ENCODE measurements at regions of chr2 and their contacts with region 1.

Region 1: GRCh38 chr2:177164584-177165052 is 48.0 kb upstream of the HNRNPA3 start:
- DNase-seq: peak; percentile 94
- H3K4me3 ChIP-seq: peak overlapping the region; percentile 32 to 50
- H3K27ac ChIP-seq: peak overlapping the region; percentile 93 to 95
- H3K4me1 ChIP-seq: peaks cover 23% of the 10 kb centered on the region
- H3K27me3 ChIP-seq: no peaks in the 10 kb centered on the region
- CTCF ChIP-seq: peak; percentile 98 to 100 (median 98)
- POLR2A ChIP-seq: no peak

Region 2: DNA sequence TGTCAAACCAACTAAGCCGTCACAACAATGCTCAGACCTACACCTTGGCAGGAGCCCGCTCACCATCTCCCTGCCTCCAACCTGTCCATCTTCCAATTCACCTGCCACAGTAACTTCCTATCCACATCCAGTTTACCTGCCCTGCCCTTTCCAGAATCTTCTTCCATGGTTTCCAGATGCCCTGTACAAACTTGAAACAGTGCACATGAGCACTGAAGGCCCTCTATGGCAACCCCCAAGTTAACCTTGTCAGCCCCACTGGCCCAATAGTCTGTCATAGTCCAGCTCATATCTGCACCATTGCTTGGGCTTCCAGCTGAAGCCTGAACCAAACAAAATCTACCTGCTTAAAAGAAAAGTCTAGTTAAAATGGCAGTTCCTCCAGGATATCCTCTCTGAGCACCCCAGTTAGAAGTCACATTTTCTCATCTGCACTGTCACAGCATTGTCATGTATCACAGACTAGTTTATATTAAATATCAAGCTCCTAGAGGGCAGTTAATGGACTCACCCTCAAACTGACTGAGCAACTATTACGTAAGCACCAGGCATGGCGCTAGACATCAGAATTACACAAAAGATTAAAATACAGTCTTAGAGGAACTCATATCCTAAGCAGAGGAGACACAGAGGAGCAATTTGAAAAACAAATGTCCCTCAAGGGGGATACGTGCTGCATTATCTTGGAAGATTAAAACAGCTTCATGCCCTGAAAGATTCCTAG is 88.4 kb after region 1 on chr2:
- intact Hi-C with region 1: no loop called
- DNase-seq: no peak
- H3K4me3 ChIP-seq: no peak overlapping the region
- H3K27ac ChIP-seq: peak overlapping the region; percentile 5 to 60
- H3K4me1 ChIP-seq: peaks cover 84% of the 10 kb centered on the region
- H3K27me3 ChIP-seq: no peaks in the 10 kb centered on the region
- CTCF ChIP-seq: no peak
- POLR2A ChIP-seq: no peak

Region 3: GRCh38 chr2:177263451-177264208 is 99.0 kb after region 1 on chr2:
- intact Hi-C with region 1: loop called (anchors 10 kb)
- DNase-seq: peak; percentile 98
- H3K4me3 ChIP-seq: peak overlapping the region; percentile 99 to 100
- H3K27ac ChIP-seq: peak overlapping the region; percentile 100
- H3K4me1 ChIP-seq: peaks cover 37% of the 10 kb centered on the region
- H3K27me3 ChIP-seq: no peaks in the 10 kb centered on the region
- CTCF ChIP-seq: peak; percentile 79 to 94 (median 90)
- POLR2A ChIP-seq: no peak

Region 4: GRCh38 chr2:177325270-177325929 is 160.8 kb after region 1 on chr2:
- intact Hi-C with region 1: loop called (anchors 10 kb)
- DNase-seq: no peak
- H3K4me3 ChIP-seq: no peak overlapping the region
- H3K27ac ChIP-seq: no peak overlapping the region
- H3K4me1 ChIP-seq: no peaks in the 10 kb centered on the region
- H3K27me3 ChIP-seq: no peaks in the 10 kb centered on the region
- CTCF ChIP-seq: no peak
- POLR2A ChIP-seq: no peak

Region 5: GRCh38 chr2:177419274-177419673 is 254.7 kb after region 1 on chr2:
- intact Hi-C with region 1: loop called (anchors 10 kb)
- DNase-seq: no peak
- H3K4me3 ChIP-seq: no peak overlapping the region
- H3K27ac ChIP-seq: no peak overlapping the region
- H3K4me1 ChIP-seq: peaks cover 13% of the 10 kb centered on the region
- H3K27me3 ChIP-seq: no peaks in the 10 kb centered on the region
- CTCF ChIP-seq: no peak
- POLR2A ChIP-seq: no peak

Region 6: DNA sequence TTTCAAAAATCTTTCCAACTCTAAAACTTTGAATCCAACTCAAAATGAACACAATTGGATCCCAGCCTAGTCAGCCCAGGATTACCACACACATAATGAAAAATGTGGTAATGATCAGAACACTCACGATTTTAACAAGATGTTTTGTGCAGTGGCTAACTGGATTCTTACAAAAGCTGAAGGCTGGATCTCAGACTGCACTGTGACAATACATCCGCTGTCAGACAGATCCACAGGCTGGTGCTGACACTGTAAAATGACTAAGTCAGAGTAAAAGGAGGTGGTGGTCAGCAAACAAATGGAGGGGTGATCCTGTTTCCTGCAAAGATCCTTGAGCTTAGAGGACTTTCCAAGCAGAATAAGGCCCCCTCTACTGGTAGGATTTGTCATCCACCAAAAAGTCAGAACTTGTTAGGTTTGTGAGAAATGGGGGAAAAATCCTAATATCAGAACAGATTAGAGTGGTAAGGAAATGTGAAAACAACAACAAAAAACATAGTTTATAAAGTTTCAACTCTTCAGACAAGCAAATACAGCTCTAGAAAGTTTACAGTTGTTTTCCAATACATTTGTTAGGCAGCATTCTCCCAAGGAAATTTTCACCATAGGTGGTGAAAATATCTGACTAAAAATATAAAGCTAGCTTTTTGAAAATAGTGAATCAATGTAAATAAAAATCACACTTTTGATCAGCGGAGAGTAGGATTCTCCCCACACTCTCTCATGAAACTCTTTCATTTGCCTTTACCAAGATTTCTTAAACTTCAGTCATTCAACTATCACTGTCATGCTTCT is 439.9 kb after region 1 on chr2:
- intact Hi-C with region 1: loop called (anchors 10 kb)
- DNase-seq: peak; percentile 36
- H3K4me3 ChIP-seq: no peak overlapping the region
- H3K27ac ChIP-seq: peak overlapping the region in 1 of 2 donors; percentile 8
- H3K4me1 ChIP-seq: peaks cover 17% of the 10 kb centered on the region
- H3K27me3 ChIP-seq: no peaks in the 10 kb centered on the region
- CTCF ChIP-seq: peak; percentile 42 to 73 (median 65)
- POLR2A ChIP-seq: no peak

Measured in testis (tissue), 5 donors.